ENCODE measurements at regions of chr15 and their contacts with region 1.

Region 1: GRCh38 chr15:40564591-40565332 is at the start of gene CCDC32:
- DNase-seq: peak; percentile 97
- ATAC-seq: peak; percentile 98
- H3K4me3 Mint-ChIP-seq: peak within 1 kb of the TSS; percentile 89
- H3K27ac Mint-ChIP-seq: peak within 1 kb of the TSS; percentile 92
- H3K4me1 Mint-ChIP-seq: peaks cover 23% of the 10 kb centered on the region
- H3K27me3 Mint-ChIP-seq: no peaks in the 10 kb centered on the region
- CTCF ChIP-seq: no peak
- total RNA-seq, gene CCDC32: 12.8 to 15.6 TPM (median 13.7 TPM) in 3 replicates

Region 2: DNA sequence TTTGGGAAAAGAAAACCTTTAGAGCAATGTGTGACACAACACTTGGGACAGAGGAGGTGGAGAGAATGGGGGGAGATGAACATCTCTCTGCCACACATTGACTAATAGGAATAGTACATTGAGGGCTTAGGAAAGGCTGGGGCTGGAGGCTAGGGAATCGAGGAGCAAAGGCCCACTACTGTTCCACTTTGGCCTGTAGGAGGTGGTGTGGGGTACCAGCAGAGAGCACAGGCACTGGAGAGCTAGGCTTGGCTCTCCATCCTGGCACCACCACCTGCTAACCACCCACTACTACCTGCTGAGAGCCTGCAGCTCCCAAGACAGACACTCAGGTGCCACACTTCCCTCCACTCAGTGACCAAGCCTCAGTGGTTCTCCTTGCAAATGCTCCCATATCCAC is 19.3 kb before region 1 on chr15:
- CTCF ChIA-PET with region 1: interaction called, 12 read pairs
- POLR2A ChIA-PET with region 1: no interaction called
- DNase-seq: no peak
- ATAC-seq: peak; percentile 75
- H3K4me3 Mint-ChIP-seq: no peak overlapping the region
- H3K27ac Mint-ChIP-seq: no peak overlapping the region
- H3K4me1 Mint-ChIP-seq: no peaks in the 10 kb centered on the region
- H3K27me3 Mint-ChIP-seq: no peaks in the 10 kb centered on the region
- CTCF ChIP-seq: no peak

Region 3: DNA sequence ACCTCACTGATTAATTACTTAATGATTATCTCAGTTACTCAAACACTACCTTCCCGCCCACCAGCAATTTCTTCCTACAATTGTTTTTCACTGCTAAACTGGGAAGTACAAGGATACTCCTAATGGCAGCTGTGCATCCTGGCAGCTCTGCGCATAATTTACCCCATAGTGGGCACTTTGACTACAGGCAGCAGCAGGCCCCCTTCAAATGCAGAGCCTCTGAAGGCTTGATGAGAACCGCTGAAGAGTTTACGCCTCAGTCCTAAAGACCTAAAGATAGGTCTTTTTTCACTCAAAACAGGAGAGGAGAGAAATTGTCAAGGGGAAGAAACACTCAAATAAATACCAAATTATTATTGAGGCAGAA is 10.6 kb before region 1 on chr15:
- CTCF ChIA-PET with region 1: interaction called, 11 read pairs
- POLR2A ChIA-PET with region 1: interaction called, 5 read pairs
- DNase-seq: peak; percentile 56
- ATAC-seq: peak; percentile 93
- H3K4me3 Mint-ChIP-seq: peak overlapping the region; percentile 7; the same call in 1 of the 2 replicates
- H3K27ac Mint-ChIP-seq: peak overlapping the region; percentile 68
- H3K4me1 Mint-ChIP-seq: peaks cover 52% of the 10 kb centered on the region
- H3K27me3 Mint-ChIP-seq: no peaks in the 10 kb centered on the region
- CTCF ChIP-seq: no peak